ENCODE measurements at regions of chr1 and their contacts with region 1.

Region 1: DNA sequence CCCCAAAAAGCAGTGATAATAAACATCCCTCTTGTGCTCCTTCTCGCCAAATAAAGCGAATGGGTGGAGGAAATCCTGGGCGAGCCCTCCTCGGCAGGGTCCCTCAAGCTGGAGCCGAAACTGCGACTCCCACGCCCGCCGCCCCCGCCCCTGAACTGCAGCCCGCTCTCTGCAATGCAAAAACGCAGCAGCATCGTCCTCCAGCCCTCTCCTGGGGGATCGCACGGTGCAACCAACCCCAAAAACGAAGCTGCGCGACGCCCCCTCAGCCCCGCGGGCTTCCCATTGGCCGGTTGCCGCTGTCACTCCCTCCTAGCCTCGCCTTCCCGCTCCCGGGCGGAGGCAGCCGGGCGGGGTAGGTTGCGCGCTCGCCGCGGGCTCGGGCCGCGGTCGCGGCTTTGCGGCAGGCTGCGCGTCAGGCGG is at the start of gene TMCC2:
- DNase-seq: peak; percentile 97
- ATAC-seq: peak; percentile 96
- H3K4me3 Mint-ChIP-seq: peak within 1 kb of the TSS; percentile 82
- H3K27ac Mint-ChIP-seq: peak within 1 kb of the TSS; percentile 95
- H3K4me1 Mint-ChIP-seq: peaks cover 34% of the 10 kb centered on the region
- H3K27me3 Mint-ChIP-seq: peaks cover 15% of the 10 kb centered on the region
- CTCF ChIP-seq: no peak
- total RNA-seq, gene TMCC2: 9.5 to 11.2 TPM (median 11.2 TPM) in 3 replicates

Region 2: GRCh38 chr1:205141236-205142101 is 86.1 kb before region 1 on chr1:
- CTCF ChIA-PET with region 1: interaction called, 12 read pairs
- POLR2A ChIA-PET with region 1: interaction called, 5 read pairs
- DNase-seq: peak; percentile 83
- ATAC-seq: peak; percentile 74
- H3K4me3 Mint-ChIP-seq: no peak overlapping the region
- H3K27ac Mint-ChIP-seq: no peak overlapping the region
- H3K4me1 Mint-ChIP-seq: peaks cover 23% of the 10 kb centered on the region
- H3K27me3 Mint-ChIP-seq: no peaks in the 10 kb centered on the region
- CTCF ChIP-seq: peak; percentile 70

Region 3: GRCh38 chr1:205237526-205238484 is 10.2 kb after region 1 on chr1:
- CTCF ChIA-PET with region 1: interaction called, 32 read pairs
- POLR2A ChIA-PET with region 1: no interaction called
- DNase-seq: no peak
- ATAC-seq: no peak
- H3K4me3 Mint-ChIP-seq: no peak overlapping the region
- H3K27ac Mint-ChIP-seq: 0 out of 2 replicates have a peak overlapping the region, but pooled peaks have one; percentile 32
- H3K4me1 Mint-ChIP-seq: peaks cover 9% of the 10 kb centered on the region
- H3K27me3 Mint-ChIP-seq: no peaks in the 10 kb centered on the region
- CTCF ChIP-seq: no peak

Region 4: DNA sequence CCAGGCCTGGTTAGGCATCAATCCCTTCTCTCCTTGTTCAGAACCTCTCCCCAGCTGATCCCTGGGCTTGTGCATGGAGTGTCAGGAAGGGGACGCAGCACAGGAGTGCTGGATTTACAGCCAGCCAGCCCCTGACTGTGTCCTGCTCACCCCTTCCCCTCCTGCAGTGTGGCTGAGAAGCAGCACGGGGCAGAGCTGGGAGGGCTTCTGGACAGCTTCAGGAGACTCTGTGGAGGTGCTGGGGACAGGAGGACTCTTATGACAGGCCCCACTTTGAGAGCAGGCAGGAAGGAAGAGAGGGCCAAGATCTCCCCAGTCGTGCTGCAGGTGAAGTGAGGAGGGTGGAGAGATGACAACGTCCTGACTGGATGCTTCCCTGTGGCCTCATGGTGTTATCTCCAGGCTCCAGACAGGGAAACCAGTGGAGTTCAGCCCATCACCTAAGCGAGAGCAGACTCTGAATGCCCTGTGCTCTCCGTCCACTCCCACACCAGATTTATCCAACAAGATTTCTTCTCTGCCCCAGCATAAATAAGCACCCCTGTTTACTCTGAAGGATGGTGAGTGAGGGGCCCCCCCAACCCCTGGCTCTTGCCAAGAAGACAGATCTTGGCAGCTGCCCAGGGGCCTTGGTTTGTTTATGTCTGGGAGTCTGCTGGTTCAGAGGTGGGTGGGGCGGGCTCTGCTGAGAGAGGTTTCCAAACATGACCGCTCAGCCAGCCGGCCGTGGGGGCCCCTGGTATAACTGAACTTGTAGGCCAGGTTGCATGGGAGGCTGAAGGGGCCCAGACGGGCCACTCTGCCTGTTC is 21.4 kb after region 1 on chr1:
- CTCF ChIA-PET with region 1: interaction called, 166 read pairs
- POLR2A ChIA-PET with region 1: no interaction called
- DNase-seq: no peak
- ATAC-seq: no peak
- H3K4me3 Mint-ChIP-seq: no peak overlapping the region
- H3K27ac Mint-ChIP-seq: peak overlapping the region; percentile 74
- H3K4me1 Mint-ChIP-seq: peaks cover 9% of the 10 kb centered on the region
- H3K27me3 Mint-ChIP-seq: no peaks in the 10 kb centered on the region
- CTCF ChIP-seq: no peak

Region 5: GRCh38 chr1:205321164-205321958 is 93.8 kb after region 1 on chr1 and contains the start of gene NUAK2:
- CTCF ChIA-PET with region 1: interaction called, 22 read pairs
- POLR2A ChIA-PET with region 1: no interaction called
- DNase-seq: peak; percentile 98
- ATAC-seq: peak; percentile 88
- H3K4me3 Mint-ChIP-seq: peak within 1 kb of the TSS; percentile 96
- H3K27ac Mint-ChIP-seq: peak within 1 kb of the TSS; percentile 68
- H3K4me1 Mint-ChIP-seq: peaks cover 60% of the 10 kb centered on the region
- H3K27me3 Mint-ChIP-seq: peaks cover 38% of the 10 kb centered on the region
- CTCF ChIP-seq: no peak
- total RNA-seq, gene NUAK2: 8.7 to 10.8 TPM (median 10.8 TPM) in 3 replicates

Measured in WTC11 (cell line).